A673 (cell line): ENCODE measurements at regions of chr10 and their contacts with region 1.

Region 1: GRCh38 chr10:132129431-132129830 is 57.3 kb upstream of the DPYSL4 start:
- DNase-seq: no peak
- H3K4me3 ChIP-seq: no peak overlapping the region
- H3K27ac ChIP-seq: no peak overlapping the region
- H3K4me1 ChIP-seq: peaks cover 6% of the 10 kb centered on the region
- H3K27me3 ChIP-seq: no peaks in the 10 kb centered on the region
- CTCF ChIP-seq: no peak

Region 2: GRCh38 chr10:131921184-131921583 is 208.2 kb before region 1 on chr10:
- CTCF ChIA-PET with region 1: no interaction called
- POLR2A ChIA-PET with region 1: no interaction called
- intact Hi-C with region 1: no loop called
- DNase-seq: no peak
- H3K4me3 ChIP-seq: no peak overlapping the region
- H3K27ac ChIP-seq: peak overlapping the region; percentile 48
- H3K4me1 ChIP-seq: no peaks in the 10 kb centered on the region
- H3K27me3 ChIP-seq: no peaks in the 10 kb centered on the region
- CTCF ChIP-seq: no peak

Region 3: GRCh38 chr10:131947631-131948347 is 181.6 kb before region 1 on chr10:
- CTCF ChIA-PET with region 1: no interaction called
- POLR2A ChIA-PET with region 1: interaction called, 12 read pairs
- intact Hi-C with region 1: no loop called
- DNase-seq: peak; percentile 84
- H3K4me3 ChIP-seq: no peak overlapping the region
- H3K27ac ChIP-seq: peak overlapping the region; percentile 50
- H3K4me1 ChIP-seq: peaks cover 18% of the 10 kb centered on the region
- H3K27me3 ChIP-seq: no peaks in the 10 kb centered on the region
- CTCF ChIP-seq: no peak

Region 4: DNA sequence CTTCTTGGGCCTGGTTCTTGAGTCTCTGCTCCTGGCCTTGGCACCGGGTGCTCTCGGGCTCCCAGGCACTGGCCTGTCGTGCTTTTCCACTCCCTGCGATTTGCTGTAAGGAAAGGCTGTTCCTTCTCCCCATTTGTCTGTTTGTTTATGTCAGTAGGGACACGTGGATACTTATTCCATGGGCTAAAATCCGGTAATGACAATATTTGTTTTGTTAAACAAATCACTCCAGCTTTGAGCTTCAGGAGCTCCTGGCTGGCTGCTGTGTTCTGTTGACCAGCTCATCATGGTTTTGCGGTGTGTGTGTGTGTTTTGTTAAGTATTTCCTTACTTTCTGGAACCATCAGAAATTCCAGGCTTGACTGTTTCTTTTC is 81.2 kb before region 1 on chr10:
- CTCF ChIA-PET with region 1: no interaction called
- POLR2A ChIA-PET with region 1: no interaction called
- intact Hi-C with region 1: no loop called
- DNase-seq: no peak
- H3K4me3 ChIP-seq: no peak overlapping the region
- H3K27ac ChIP-seq: no peak overlapping the region
- H3K4me1 ChIP-seq: no peaks in the 10 kb centered on the region
- H3K27me3 ChIP-seq: peaks cover 43% of the 10 kb centered on the region
- CTCF ChIP-seq: no peak